ENCODE measurements at regions of chr4 and their contacts with region 1.

Region 1: GRCh38 chr4:102625232-102625930 is 124.2 kb downstream of the NFKB1 start:
- DNase-seq: peak; percentile 81
- H3K4me3 Mint-ChIP-seq: peak overlapping the region; percentile 57
- H3K27ac Mint-ChIP-seq: peak overlapping the region; percentile 56
- H3K4me1 Mint-ChIP-seq: peaks cover 49% of the 10 kb centered on the region
- H3K27me3 Mint-ChIP-seq: no peaks in the 10 kb centered on the region

Region 2: DNA sequence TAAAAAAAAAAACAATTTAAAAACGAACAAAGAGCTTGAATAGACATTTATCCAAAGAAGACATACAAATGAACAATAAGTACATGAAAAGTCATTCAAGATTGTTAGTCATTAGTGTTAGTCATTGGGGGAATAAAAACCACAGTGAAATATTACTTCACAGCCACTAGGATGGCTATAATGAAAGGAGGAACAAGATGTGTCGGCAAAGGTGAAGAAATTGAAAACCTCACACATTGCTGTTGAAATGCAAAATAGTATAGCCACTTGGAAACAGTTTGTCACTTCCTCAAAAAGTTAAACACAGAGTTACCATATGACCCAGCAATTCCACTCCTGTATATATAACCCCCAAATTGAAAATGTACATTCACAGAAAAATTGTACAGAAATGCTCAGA is 234.9 kb before region 1 on chr4:
- CTCF ChIA-PET with region 1: no interaction called
- POLR2A ChIA-PET with region 1: no interaction called
- DNase-seq: no peak
- H3K4me3 Mint-ChIP-seq: no peak overlapping the region
- H3K27ac Mint-ChIP-seq: no peak overlapping the region
- H3K4me1 Mint-ChIP-seq: peaks cover 9% of the 10 kb centered on the region
- H3K27me3 Mint-ChIP-seq: peaks cover 14% of the 10 kb centered on the region

Region 3: DNA sequence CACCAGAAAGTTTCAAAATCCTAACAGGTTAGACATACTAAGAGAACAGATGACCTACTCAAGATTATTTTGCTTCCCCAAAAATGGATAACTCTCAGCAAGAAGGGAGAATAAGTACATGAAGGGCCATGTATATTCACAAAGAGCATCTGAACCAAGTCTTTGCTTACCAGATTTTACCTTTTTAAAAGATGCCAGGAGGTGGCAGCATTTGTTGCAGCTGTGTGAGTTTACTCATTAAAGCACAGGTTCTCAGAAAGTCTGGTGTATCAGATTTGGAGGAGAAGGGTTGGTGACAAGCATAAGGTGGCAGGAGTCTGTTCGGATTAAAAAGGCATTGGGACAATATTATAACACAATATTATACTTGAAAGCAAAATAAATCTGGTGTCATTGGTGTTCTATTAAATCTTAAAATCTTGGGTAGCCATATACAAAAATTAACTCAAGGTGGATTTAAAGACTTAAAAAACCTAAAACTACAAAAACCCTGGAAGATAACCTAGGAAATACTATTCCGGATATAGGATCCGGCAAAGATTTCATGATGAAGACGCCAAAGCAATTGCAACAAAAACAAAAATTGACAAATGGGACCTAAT is 175.5 kb before region 1 on chr4:
- CTCF ChIA-PET with region 1: interaction called, 45 read pairs
- POLR2A ChIA-PET with region 1: interaction called, 3 read pairs
- DNase-seq: peak; percentile 60
- H3K4me3 Mint-ChIP-seq: no peak overlapping the region
- H3K27ac Mint-ChIP-seq: no peak overlapping the region
- H3K4me1 Mint-ChIP-seq: peaks cover 41% of the 10 kb centered on the region
- H3K27me3 Mint-ChIP-seq: no peaks in the 10 kb centered on the region

Region 4: GRCh38 chr4:102578819-102579218 is 46.6 kb before region 1 on chr4:
- CTCF ChIA-PET with region 1: interaction called, 36 read pairs
- POLR2A ChIA-PET with region 1: no interaction called
- DNase-seq: no peak
- H3K4me3 Mint-ChIP-seq: no peak overlapping the region
- H3K27ac Mint-ChIP-seq: no peak overlapping the region
- H3K4me1 Mint-ChIP-seq: peaks cover 74% of the 10 kb centered on the region
- H3K27me3 Mint-ChIP-seq: no peaks in the 10 kb centered on the region

Region 5: GRCh38 chr4:102723511-102723910 is 98.1 kb after region 1 on chr4:
- CTCF ChIA-PET with region 1: no interaction called
- POLR2A ChIA-PET with region 1: no interaction called
- DNase-seq: no peak
- H3K4me3 Mint-ChIP-seq: no peak overlapping the region
- H3K27ac Mint-ChIP-seq: no peak overlapping the region
- H3K4me1 Mint-ChIP-seq: peaks cover 7% of the 10 kb centered on the region
- H3K27me3 Mint-ChIP-seq: no peaks in the 10 kb centered on the region

Region 6: GRCh38 chr4:103091601-103092223 is 466.3 kb after region 1 on chr4:
- CTCF ChIA-PET with region 1: interaction called, 10 read pairs
- POLR2A ChIA-PET with region 1: no interaction called
- DNase-seq: peak; percentile 56
- H3K4me3 Mint-ChIP-seq: peak overlapping the region; percentile 65
- H3K27ac Mint-ChIP-seq: peak overlapping the region; percentile 75
- H3K4me1 Mint-ChIP-seq: peaks cover 31% of the 10 kb centered on the region
- H3K27me3 Mint-ChIP-seq: no peaks in the 10 kb centered on the region